Gastrocnemius medialis (tissue), 4 donors: ENCODE measurements at regions of chr13 and their contacts with region 1.

Region 1: GRCh38 chr13:97322740-97323342 is 100.7 kb downstream of the MBNL2 start:
- DNase-seq: no peak
- ATAC-seq: no peak
- H3K4me3 ChIP-seq: no peak overlapping the region
- H3K27ac ChIP-seq: peak overlapping the region in 3 of 4 donors; percentile 81 to 88 (median 87)
- H3K4me1 ChIP-seq: peaks cover 79 to 81% of the 10 kb centered on the region in 2 donors
- H3K27me3 ChIP-seq: no peaks in the 10 kb centered on the region
- CTCF ChIP-seq: no peak
- POLR2A ChIP-seq: no peak

Region 2: GRCh38 chr13:96632536-96633320 is 690.1 kb before region 1 on chr13:
- in situ Hi-C with region 1: no loop called
- intact Hi-C with region 1: no loop called
- DNase-seq: no peak
- ATAC-seq: no peak
- H3K4me3 ChIP-seq: no peak overlapping the region
- H3K27ac ChIP-seq: no peak overlapping the region
- H3K4me1 ChIP-seq: no peaks in the 10 kb centered on the region
- H3K27me3 ChIP-seq: no peaks in the 10 kb centered on the region
- CTCF ChIP-seq: no peak
- POLR2A ChIP-seq: no peak

Region 3: GRCh38 chr13:97221989-97222700 is 100.7 kb before region 1 on chr13 and contains the start of gene MBNL2:
- in situ Hi-C with region 1: no loop called
- intact Hi-C with region 1: no loop called
- DNase-seq: peak; percentile 89 to 91
- ATAC-seq: peak; percentile 86 to 88
- H3K4me3 ChIP-seq: peak within 1 kb of the TSS; percentile 62 to 83 (median 70)
- H3K27ac ChIP-seq: peak within 1 kb of the TSS; percentile 89 to 93 (median 91)
- H3K4me1 ChIP-seq: peaks cover 28 to 32% of the 10 kb centered on the region in 2 donors
- H3K27me3 ChIP-seq: no peaks in the 10 kb centered on the region
- CTCF ChIP-seq: no peak
- POLR2A ChIP-seq: peak; percentile 59 to 87
- total RNA-seq, gene MBNL2: 47.9 to 92.0 (median 71.3) TPM

Region 4: DNA sequence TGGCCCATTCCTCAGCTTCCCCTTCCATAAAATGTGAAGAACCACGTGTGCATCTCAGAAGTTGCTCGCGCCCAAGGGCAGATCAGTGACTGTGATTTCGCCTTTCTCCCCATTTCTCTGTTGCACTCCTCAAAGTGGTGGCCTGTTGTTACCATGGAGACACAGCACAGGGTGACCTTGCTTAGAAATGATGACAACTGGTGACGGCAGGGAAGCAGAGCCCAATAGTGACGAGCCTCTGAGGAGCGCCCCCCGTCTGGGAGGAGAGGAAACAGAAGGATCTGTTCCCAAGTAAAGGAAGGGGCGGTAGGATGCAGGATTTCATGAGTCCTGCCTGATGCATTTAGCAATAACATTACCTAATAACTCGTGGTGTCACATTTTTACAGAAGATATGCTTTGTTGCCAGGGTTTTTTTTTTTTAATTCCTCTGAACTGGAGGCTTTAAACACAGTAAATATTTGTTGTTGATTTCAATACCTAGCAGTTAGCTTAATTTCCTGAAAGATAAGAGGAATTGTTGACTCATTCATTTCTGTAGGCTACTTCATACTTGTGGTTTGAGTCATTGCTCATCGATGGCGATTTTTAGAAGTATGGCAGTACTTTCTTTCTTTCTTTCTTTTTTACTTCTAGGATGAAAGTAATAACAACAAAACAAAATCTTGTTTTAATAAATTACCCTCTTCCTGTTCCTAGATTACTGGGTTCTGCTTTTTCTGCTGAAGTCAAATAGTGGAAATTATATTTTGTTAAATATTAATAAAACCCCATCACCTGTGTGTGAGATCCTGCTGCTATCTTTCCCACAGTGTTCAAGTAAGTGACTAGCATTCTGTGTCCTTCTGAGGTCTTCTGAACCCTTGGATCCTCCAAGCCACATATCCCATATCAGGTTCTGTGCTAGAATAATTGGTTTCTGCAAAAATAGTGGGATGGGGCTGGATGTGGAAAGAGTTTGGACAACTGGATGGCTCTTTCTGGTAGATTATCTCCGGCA is 64.7 kb before region 1 on chr13:
- in situ Hi-C with region 1: no loop called
- intact Hi-C with region 1: loop called (anchors 5 kb)
- DNase-seq: peak; percentile 48 to 79
- ATAC-seq: peak; percentile 37 to 57
- H3K4me3 ChIP-seq: no peak overlapping the region
- H3K27ac ChIP-seq: peak overlapping the region; percentile 72 to 87 (median 76)
- H3K4me1 ChIP-seq: peaks cover 94 to 97% of the 10 kb centered on the region in 2 donors
- H3K27me3 ChIP-seq: no peaks in the 10 kb centered on the region
- CTCF ChIP-seq: no peak
- POLR2A ChIP-seq: no peak

Region 5: GRCh38 chr13:97386801-97387484 is 64.1 kb after region 1 on chr13:
- in situ Hi-C with region 1: no loop called
- intact Hi-C with region 1: no loop called
- DNase-seq: no peak
- ATAC-seq: no peak
- H3K4me3 ChIP-seq: no peak overlapping the region
- H3K27ac ChIP-seq: no peak overlapping the region
- H3K4me1 ChIP-seq: peaks cover 0 to 4% of the 10 kb centered on the region in 2 donors
- H3K27me3 ChIP-seq: no peaks in the 10 kb centered on the region
- CTCF ChIP-seq: no peak
- POLR2A ChIP-seq: no peak